ENCODE measurements at regions of chr7 and their contacts with region 1.

Region 1: DNA sequence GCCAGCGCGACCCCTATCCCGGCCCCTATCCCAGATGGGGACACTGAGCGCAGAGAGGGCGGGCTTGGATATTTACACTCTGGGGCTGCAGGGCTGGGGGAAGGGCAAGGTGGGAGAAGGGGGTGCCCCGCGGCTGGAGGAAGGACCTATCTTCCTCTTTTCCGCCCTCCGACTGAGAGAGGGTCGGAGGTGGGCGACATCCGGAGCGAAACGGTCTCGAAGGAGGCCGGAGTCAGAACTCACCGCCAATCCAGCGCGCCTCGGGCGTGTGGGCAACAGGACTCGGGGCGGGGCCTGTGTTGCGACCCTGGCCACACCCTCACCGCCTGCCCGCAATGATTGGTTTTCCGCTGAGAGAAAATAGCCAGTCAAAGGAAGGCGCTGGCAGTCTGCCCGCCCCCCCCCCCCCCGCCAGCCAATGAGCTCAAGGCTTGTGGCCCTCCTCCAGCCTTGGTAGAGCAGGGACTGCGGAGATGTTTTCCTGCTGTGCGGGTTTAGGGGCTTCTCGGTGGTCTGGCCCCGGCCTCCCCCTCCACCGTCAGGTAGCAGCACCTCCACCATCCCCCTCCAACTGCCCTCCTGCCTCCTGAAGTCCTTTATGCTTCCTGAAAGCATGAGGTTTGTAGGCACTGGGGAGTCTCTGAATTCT is at the start of gene METTL27:
- DNase-seq: peak; percentile 93
- H3K4me3 Mint-ChIP-seq: peak within 1 kb of the TSS; percentile 86
- H3K27ac Mint-ChIP-seq: peak within 1 kb of the TSS; percentile 78
- H3K4me1 Mint-ChIP-seq: peaks cover 22% of the 10 kb centered on the region
- H3K27me3 Mint-ChIP-seq: no peaks in the 10 kb centered on the region
- CTCF ChIP-seq: no peak
- total RNA-seq, gene METTL27: 4.4 and 7.3 TPM in 2 replicates

Region 2: DNA sequence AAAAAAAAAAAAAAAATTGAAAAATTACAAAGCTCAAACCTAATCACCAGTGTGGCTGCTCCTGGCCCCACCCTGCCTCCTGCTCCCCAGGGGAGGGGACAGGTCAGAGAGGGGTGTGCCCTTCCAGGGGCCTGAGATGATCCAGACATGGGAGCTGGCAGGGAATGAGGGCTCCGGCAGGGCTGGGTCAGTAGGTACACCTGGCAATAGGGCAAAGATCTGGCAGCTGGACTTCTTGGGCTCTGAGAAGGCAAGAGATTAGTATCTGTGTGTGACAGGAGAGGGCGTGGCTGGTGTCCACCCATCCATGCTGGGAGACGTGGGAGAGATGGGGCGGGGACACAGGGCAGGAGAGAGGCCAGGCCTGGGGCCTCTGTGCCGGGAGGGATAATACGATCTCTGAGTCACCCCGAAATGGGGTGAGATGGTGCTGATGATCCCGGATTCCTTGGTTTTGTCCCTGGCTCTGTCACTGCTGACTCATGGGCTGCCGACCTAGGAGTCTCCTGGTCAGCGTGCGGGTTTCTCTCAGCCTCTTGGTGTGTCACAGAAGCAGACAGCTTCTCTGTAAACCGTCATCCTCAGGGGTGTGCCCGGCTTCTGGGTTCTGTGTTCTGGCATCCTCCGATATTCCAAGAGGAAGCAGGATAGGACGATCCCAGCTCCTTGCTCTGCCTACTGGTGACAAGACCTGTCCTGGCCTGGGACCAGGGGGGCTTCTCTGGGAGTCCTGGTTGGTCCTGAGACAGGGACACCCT is 19.9 kb before region 1 on chr7:
- CTCF ChIA-PET with region 1: no interaction called
- POLR2A ChIA-PET with region 1: interaction called, 16 read pairs
- intact Hi-C with region 1: no loop called
- DNase-seq: peak; percentile 98
- H3K4me3 Mint-ChIP-seq: peak overlapping the region; percentile 13
- H3K27ac Mint-ChIP-seq: peak overlapping the region; percentile 80
- H3K4me1 Mint-ChIP-seq: peaks cover 31% of the 10 kb centered on the region
- H3K27me3 Mint-ChIP-seq: no peaks in the 10 kb centered on the region
- CTCF ChIP-seq: no peak

Region 3: DNA sequence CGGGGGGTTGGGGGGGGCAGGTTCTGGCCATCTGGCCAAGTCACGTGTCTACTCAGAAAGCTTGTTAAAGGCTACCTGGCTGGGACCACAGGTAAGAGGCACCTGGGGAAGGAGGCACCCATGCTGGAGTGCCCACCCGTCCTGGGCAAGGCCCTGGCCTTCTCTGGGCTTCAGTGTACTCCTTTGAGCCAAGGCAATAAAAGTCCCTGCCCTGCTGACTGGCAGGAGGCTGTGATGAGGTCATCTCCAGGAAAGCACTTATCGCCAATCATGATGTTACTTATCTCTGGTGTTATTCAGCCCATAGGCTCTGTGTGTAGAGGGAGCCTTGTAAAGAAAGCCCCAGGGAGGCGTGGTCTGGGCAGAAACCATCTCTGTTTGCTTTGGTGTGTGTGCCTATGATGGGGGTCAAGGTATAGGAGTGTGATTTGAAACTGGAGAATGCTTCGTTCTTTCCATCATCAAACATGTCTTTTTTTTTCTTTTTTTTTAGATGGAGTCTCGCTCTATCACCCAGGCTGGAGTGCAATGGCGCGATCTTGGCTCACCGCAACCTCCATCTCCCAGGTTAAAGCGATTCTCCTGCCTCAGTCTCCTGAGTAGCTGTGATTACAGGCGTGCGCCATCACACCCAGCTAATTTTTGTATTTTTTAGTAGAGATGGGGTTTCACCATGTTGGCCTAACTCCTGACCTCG is 14.1 kb before region 1 on chr7:
- CTCF ChIA-PET with region 1: interaction called, 5 read pairs
- POLR2A ChIA-PET with region 1: interaction called, 16 read pairs
- intact Hi-C with region 1: no loop called
- DNase-seq: peak; percentile 58
- H3K4me3 Mint-ChIP-seq: peak overlapping the region; percentile 15
- H3K27ac Mint-ChIP-seq: peak overlapping the region; percentile 61
- H3K4me1 Mint-ChIP-seq: peaks cover 35% of the 10 kb centered on the region
- H3K27me3 Mint-ChIP-seq: no peaks in the 10 kb centered on the region
- CTCF ChIP-seq: no peak

Measured in MCF 10A (cell line).